Left ventricle myocardium inferior (tissue), 1 donor: ENCODE measurements at regions of chr3 and their contacts with region 1.

Region 1: GRCh38 chr3:16247276-16248061 is 17.3 kb downstream of the DPH3 start:
- DNase-seq: peak; percentile 57
- H3K4me3 ChIP-seq: no peak overlapping the region
- H3K27ac ChIP-seq: no peak overlapping the region
- H3K4me1 ChIP-seq: peaks cover 26% of the 10 kb centered on the region
- H3K27me3 ChIP-seq: no peaks in the 10 kb centered on the region
- CTCF ChIP-seq: peak; percentile 96

Region 2: GRCh38 chr3:15629860-15630597 is 617.4 kb before region 1 on chr3:
- intact Hi-C with region 1: loop called (anchors 10 kb)
- DNase-seq: no peak
- H3K4me3 ChIP-seq: peak overlapping the region; percentile 49
- H3K27ac ChIP-seq: peak overlapping the region; percentile 36
- H3K4me1 ChIP-seq: peaks cover 29% of the 10 kb centered on the region
- H3K27me3 ChIP-seq: no peaks in the 10 kb centered on the region
- CTCF ChIP-seq: peak; percentile 86

Region 3: GRCh38 chr3:15815696-15816095 is 431.8 kb before region 1 on chr3:
- intact Hi-C with region 1: loop called (anchors 5 kb)
- DNase-seq: no peak
- H3K4me3 ChIP-seq: no peak overlapping the region
- H3K27ac ChIP-seq: no peak overlapping the region
- H3K4me1 ChIP-seq: peaks cover 15% of the 10 kb centered on the region
- H3K27me3 ChIP-seq: no peaks in the 10 kb centered on the region
- CTCF ChIP-seq: peak; percentile 63

Region 4: GRCh38 chr3:16048435-16049318 is 198.8 kb before region 1 on chr3:
- intact Hi-C with region 1: loop called (anchors 2 kb)
- DNase-seq: no peak
- H3K4me3 ChIP-seq: peak overlapping the region; percentile 44
- H3K27ac ChIP-seq: no peak overlapping the region
- H3K4me1 ChIP-seq: peaks cover 25% of the 10 kb centered on the region
- H3K27me3 ChIP-seq: no peaks in the 10 kb centered on the region
- CTCF ChIP-seq: peak; percentile 87

Region 5: DNA sequence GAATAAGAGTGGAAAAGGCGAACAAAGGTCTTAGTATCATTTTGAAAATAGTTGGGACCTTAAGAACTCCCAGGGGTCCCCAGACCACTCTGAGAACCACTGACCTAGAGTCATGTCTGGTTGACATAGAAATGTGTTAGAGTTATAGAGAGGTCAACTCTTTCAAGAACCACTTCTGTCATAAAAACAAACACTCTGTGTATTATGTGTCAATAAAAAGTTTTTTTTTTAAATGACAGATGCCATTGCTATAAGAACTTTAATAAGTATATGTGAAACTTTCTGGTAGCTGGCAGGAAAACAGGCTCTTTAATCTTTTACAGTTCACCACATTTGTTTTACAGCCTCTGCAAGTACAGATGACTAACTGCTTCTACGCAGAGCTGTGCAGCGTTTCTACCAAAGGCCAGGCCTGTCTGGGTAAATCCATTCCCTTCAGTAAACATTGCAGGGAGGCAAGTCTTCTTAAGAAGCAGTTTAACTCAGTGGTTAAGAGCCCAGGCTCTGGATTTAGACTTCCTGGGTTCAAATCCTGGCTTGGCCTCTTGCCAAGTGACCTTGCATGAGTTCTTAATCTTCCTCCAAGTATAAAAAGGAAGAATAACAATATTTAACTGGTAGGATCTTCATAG is 209.4 kb after region 1 on chr3:
- intact Hi-C with region 1: no loop called
- DNase-seq: no peak
- H3K4me3 ChIP-seq: no peak overlapping the region
- H3K27ac ChIP-seq: no peak overlapping the region
- H3K4me1 ChIP-seq: peaks cover 38% of the 10 kb centered on the region
- H3K27me3 ChIP-seq: no peaks in the 10 kb centered on the region
- CTCF ChIP-seq: no peak